MCF 10A (cell line): ENCODE measurements at regions of chr1 and their contacts with region 1.

Region 1: GRCh38 chr1:181088079-181089016 is at the start of gene IER5:
- DNase-seq: peak; percentile 99
- H3K4me3 Mint-ChIP-seq: peak within 1 kb of the TSS; percentile 100
- H3K27ac Mint-ChIP-seq: peak within 1 kb of the TSS; percentile 99
- H3K4me1 Mint-ChIP-seq: peaks cover 43% of the 10 kb centered on the region
- H3K27me3 Mint-ChIP-seq: no peaks in the 10 kb centered on the region
- CTCF ChIP-seq: no peak
- total RNA-seq, gene IER5: 47.5 and 49.5 TPM in 2 replicates

Region 2: DNA sequence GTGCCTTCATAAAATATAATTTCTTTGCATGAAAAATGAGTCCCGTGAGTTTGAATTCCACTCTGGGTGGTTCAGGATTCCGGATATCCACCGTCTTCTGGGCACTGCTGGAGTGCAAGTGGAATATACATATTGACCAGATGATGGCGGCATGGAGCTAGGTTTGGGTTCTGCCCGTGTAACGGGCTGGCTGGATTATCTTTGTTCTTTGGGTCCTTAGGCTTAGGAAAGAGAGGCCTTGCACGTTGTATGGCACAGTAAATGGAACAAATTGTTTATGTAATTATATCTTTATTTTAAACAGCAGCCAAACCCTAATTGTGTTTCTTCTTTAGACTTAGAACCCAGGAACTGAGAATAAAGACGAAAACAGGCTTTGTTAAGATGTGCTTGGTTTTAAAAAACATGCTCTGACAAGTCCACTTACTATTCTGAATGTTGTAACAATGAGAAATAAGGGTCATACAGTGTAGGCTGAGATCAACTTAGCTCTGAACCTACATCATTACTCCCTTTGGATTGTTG is 572.4 kb before region 1 on chr1:
- CTCF ChIA-PET with region 1: interaction called, 3 read pairs
- POLR2A ChIA-PET with region 1: interaction called, 10 read pairs
- intact Hi-C with region 1: loop called (anchors 5 kb)
- DNase-seq: peak; percentile 95
- H3K4me3 Mint-ChIP-seq: no peak overlapping the region
- H3K27ac Mint-ChIP-seq: peak overlapping the region; percentile 91
- H3K4me1 Mint-ChIP-seq: peaks cover 7% of the 10 kb centered on the region
- H3K27me3 Mint-ChIP-seq: no peaks in the 10 kb centered on the region
- CTCF ChIP-seq: peak; percentile 98

Region 3: DNA sequence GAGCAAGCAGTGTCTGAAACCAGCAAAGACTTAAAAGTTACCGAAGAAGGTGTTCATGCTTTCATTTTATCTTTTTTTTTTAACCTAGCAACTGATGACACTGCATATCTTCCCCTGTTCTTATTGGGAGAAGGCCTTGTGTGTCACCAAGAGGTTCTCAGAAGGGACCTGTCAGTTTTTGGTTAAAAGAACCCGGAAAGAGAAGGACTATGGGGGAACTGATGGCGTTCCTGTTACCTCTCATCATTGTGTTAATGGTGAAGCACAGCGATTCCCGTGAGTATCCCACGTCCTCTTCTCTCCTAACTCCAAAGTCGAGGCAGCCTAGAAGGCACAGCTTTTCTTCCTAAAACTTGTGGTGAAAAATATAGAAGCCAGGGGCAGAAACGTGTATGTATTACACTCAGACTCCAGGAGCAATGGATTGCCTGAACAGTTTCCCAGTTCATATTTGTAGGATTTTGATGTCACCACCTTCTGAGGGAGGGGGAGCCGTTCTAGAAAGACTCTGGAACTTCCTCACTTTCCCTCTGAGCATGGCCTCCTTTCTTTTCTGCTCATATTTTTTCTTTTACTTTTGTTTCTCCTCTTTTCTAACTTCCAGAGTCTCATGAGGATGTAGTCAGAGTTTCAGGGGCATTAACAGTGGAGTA is 54.4 kb before region 1 on chr1 and contains the start of gene MR1:
- CTCF ChIA-PET with region 1: interaction called, 9 read pairs
- POLR2A ChIA-PET with region 1: interaction called, 309 read pairs
- intact Hi-C with region 1: loop called (anchors 1 kb)
- DNase-seq: peak; percentile 94
- H3K4me3 Mint-ChIP-seq: peak within 1 kb of the TSS; percentile 91
- H3K27ac Mint-ChIP-seq: peak within 1 kb of the TSS; percentile 98
- H3K4me1 Mint-ChIP-seq: peaks cover 49% of the 10 kb centered on the region
- H3K27me3 Mint-ChIP-seq: no peaks in the 10 kb centered on the region
- CTCF ChIP-seq: no peak
- total RNA-seq, gene MR1: 33.4 and 46.6 TPM in 2 replicates

Region 4: DNA sequence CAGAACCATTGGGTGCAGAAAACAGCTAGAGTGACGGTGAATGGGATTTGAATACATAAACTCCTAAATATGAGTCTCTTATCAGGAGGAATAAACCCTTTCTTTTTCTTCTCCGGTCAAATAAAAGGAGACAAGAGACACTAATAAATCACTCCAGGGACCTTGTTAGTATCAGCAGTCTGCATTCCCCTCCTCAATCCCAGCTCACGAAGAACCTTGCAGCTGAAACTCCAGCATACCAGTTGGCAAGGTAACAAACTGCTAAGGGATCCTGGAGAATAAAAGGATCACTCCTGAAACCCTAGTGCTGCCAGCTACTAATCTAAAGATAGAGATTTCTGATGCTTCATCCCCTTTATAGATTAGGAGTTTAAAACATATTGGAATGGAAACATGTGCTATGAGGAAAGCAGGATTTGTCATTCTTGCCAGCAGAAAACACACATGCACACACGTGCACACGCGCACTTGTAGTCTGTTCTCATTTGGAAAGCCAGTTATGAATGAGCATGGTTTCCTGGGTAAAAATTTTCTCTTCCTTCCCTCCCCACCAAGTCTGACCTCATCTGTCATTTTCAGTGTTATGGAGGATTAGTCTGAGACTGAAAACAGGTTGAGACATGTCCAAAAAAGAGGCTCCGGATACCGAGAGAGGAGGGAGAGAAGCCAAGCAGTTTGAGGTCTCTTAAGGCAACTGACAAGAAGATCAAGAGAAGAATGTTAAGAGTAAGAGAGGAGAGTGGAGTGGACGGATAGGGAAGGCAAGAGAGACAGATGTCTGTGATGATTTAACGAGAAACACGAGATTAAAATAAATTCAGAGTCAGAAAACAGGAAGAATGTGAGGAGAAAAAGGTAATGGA is 11.0 kb after region 1 on chr1:
- CTCF ChIA-PET with region 1: interaction called, 27 read pairs
- POLR2A ChIA-PET with region 1: interaction called, 1,371 read pairs
- intact Hi-C with region 1: loop called (anchors 1 kb)
- DNase-seq: peak; percentile 94
- H3K4me3 Mint-ChIP-seq: peak overlapping the region; percentile 26
- H3K27ac Mint-ChIP-seq: peak overlapping the region; percentile 72
- H3K4me1 Mint-ChIP-seq: peaks cover 65% of the 10 kb centered on the region
- H3K27me3 Mint-ChIP-seq: no peaks in the 10 kb centered on the region
- CTCF ChIP-seq: no peak

Region 5: DNA sequence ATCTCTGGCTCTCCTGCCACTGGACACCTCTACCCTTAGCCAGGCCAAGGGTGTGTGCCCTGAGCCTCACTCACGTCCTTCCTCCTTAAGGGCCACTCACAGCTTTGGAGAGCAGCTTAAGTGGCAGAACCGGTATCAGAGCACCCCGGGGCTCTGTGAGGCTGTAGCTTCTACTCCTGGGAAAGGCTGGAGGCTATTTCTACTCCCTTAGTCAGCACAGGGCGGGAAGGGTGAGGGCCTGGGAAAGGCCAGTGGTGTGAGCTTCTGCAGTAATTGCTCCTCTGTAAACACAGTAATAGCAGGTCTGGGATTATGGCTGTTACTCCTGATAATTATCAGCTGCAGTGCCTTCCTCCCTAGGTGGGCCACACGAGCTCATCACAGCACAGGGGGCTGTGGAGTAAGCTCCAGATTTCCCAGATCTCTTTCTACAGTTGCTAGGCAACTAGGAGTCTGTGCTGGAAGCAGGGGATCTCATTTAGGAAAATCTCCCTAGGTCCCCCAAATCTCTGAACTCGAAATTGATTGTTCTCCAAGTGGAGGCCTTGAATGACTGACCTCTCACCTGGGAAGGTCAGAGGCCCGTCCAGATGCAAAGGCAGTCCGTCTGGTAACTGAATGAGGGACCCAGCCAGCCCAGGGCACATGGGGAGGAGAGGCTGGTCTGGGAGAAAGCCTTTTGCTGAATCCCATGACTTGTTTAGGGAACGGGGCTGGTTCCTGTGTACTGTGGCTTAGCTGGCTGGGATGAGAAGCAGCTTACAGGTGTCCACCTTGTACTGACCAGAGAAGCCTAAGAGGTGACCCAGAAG is 29.5 kb after region 1 on chr1:
- CTCF ChIA-PET with region 1: interaction called, 21 read pairs
- POLR2A ChIA-PET with region 1: interaction called, 1,371 read pairs
- intact Hi-C with region 1: no loop called
- DNase-seq: peak; percentile 89
- H3K4me3 Mint-ChIP-seq: no peak overlapping the region
- H3K27ac Mint-ChIP-seq: peak overlapping the region; percentile 77
- H3K4me1 Mint-ChIP-seq: peaks cover 50% of the 10 kb centered on the region
- H3K27me3 Mint-ChIP-seq: no peaks in the 10 kb centered on the region
- CTCF ChIP-seq: no peak

Region 6: GRCh38 chr1:181166377-181167196 is 78.2 kb after region 1 on chr1:
- CTCF ChIA-PET with region 1: interaction called, 33 read pairs
- POLR2A ChIA-PET with region 1: interaction called, 8 read pairs
- intact Hi-C with region 1: loop called (anchors 1 kb)
- DNase-seq: peak; percentile 90
- H3K4me3 Mint-ChIP-seq: no peak overlapping the region
- H3K27ac Mint-ChIP-seq: no peak overlapping the region
- H3K4me1 Mint-ChIP-seq: no peaks in the 10 kb centered on the region
- H3K27me3 Mint-ChIP-seq: no peaks in the 10 kb centered on the region
- CTCF ChIP-seq: peak; percentile 97